ENCODE measurements at regions of chr19 and their contacts with region 1.

Region 1: GRCh38 chr19:2151339-2152229 is at the start of gene AP3D1:
- DNase-seq: peak; percentile 100
- ATAC-seq: peak; percentile 93
- H3K4me3 ChIP-seq: peak within 1 kb of the TSS; percentile 94 to 98
- H3K27ac ChIP-seq: peak within 1 kb of the TSS; percentile 83 to 89 (median 86)
- H3K4me1 ChIP-seq: peaks cover 38% of the 10 kb centered on the region
- H3K27me3 ChIP-seq: no peaks in the 10 kb centered on the region
- CTCF ChIP-seq: peak in 1 of 7 experiments; percentile 6
- POLR2A ChIP-seq: peak in 1 of 3 donors; percentile 38
- total RNA-seq, gene AP3D1: 77.0 to 124 TPM

Region 2: DNA sequence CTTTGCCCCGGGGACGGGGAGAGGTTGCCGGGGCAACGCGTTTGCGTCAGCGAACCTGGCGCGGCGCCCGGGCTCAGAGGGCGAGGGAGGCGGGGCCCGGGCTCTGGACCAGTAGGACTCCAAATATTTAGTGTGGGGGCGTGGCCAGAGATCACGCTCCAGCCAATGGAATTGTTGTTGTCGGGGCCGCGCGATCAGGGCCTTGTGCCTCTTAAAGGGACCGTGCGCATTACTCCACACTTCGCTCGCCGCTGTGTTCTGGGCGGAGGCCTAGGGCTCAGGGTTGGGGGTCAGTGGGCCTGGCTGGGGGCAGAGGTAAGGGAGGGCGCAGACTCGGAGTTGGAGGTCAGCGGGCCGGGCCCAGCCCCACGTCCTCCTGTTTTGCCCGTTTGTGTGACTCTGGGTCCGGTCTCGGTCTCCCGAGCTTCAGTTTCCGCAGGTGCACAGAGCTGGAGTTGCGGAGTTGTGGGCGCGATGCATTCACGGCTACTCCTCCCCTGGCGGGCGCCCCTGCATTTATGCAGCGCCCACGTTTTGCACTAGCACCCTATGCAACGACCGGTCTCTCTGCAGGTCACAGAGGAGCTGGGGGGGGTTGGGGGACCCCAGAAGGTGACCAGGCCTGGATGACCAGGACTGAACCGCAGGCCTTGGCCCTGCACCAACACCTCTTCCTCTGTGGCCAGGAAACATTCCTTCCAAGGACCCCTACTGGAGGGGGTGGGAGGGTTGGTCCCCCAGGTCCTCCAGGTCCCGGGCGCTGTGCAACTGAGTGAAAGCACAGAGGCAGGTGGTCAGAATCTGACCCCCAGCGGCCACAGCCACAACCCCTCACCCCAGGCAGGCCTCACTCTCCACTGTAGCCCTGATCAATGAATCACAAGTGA is 89.8 kb before region 1 on chr19:
- intact Hi-C with region 1: no loop called
- DNase-seq: peak; percentile 100
- ATAC-seq: peak; percentile 90
- H3K4me3 ChIP-seq: peak overlapping the region; percentile 24 to 29
- H3K27ac ChIP-seq: peak overlapping the region; percentile 96 to 100 (median 98)
- H3K4me1 ChIP-seq: peaks cover 50% of the 10 kb centered on the region
- H3K27me3 ChIP-seq: no peaks in the 10 kb centered on the region
- CTCF ChIP-seq: no peak
- POLR2A ChIP-seq: peak in 2 of 3 donors; percentile 72 to 75

Region 3: DNA sequence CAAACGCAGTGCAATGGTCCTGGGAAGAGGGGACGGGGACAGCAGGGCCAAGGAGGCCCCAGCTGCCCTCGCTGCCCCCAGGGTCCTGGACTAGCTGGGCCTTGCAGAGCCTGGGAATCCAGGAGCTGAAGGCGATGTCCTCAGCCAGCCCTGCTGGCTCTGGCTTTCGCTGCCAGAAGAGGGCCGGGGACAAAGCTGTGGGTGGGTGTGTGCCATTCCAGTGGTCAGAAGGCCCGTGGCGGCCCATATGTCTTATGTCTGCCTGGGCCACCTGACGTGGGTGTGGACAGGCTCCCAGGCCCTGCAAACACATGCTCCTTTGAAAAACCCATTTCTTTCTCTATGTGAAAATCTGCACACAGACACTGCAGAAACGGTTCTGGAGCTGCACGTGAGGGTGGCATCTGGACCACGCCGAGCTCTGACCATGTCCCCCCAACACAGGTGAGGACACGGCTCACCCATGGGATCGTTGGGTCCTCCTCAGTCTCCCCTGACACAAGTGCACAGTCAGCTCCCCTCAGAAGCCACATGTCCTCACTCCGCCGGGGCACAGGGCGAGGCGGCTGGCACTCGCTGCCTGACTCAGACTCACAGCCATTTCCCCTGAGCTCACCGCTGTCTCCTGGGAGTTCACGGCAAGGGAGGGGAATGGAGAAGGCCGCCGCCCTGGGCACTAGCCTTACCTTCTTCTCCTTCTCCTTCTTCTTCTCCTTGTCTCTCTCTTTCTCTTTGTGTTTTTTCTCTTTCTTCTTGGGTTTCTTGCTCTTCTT is 38.0 kb before region 1 on chr19:
- intact Hi-C with region 1: loop called (anchors 5 kb)
- DNase-seq: no peak
- ATAC-seq: no peak
- H3K4me3 ChIP-seq: no peak overlapping the region
- H3K27ac ChIP-seq: no peak overlapping the region
- H3K4me1 ChIP-seq: peaks cover 13% of the 10 kb centered on the region
- H3K27me3 ChIP-seq: no peaks in the 10 kb centered on the region
- CTCF ChIP-seq: no peak
- POLR2A ChIP-seq: no peak

Region 4: GRCh38 chr19:2273356-2274184 is 122.0 kb after region 1 on chr19:
- intact Hi-C with region 1: loop called (anchors 5 kb)
- DNase-seq: peak; percentile 77 to 81 (median 79)
- ATAC-seq: peak; percentile 19
- H3K4me3 ChIP-seq: no peak overlapping the region
- H3K27ac ChIP-seq: peak overlapping the region; percentile 68 to 100 (median 87)
- H3K4me1 ChIP-seq: peaks cover 46% of the 10 kb centered on the region
- H3K27me3 ChIP-seq: no peaks in the 10 kb centered on the region
- CTCF ChIP-seq: peak; percentile 94 to 99 (median 96)
- POLR2A ChIP-seq: peak in 1 of 3 donors; percentile 24

Region 5: GRCh38 chr19:2385053-2385721 is 233.6 kb after region 1 on chr19:
- intact Hi-C with region 1: loop called (anchors 10 kb)
- DNase-seq: peak; percentile 18 to 59 (median 42)
- ATAC-seq: peak; percentile 52
- H3K4me3 ChIP-seq: no peak overlapping the region
- H3K27ac ChIP-seq: no peak overlapping the region
- H3K4me1 ChIP-seq: no peaks in the 10 kb centered on the region
- H3K27me3 ChIP-seq: no peaks in the 10 kb centered on the region
- CTCF ChIP-seq: no peak
- POLR2A ChIP-seq: no peak

Measured in body of pancreas (tissue), 4 donors.